Activated naive CD4-positive, alpha-beta T cell treated with anti-CD3 and anti-CD28 coated beads for 36 hours (primary cell): ENCODE measurements at regions of chr3 and their contacts with region 1.

Region 1: DNA sequence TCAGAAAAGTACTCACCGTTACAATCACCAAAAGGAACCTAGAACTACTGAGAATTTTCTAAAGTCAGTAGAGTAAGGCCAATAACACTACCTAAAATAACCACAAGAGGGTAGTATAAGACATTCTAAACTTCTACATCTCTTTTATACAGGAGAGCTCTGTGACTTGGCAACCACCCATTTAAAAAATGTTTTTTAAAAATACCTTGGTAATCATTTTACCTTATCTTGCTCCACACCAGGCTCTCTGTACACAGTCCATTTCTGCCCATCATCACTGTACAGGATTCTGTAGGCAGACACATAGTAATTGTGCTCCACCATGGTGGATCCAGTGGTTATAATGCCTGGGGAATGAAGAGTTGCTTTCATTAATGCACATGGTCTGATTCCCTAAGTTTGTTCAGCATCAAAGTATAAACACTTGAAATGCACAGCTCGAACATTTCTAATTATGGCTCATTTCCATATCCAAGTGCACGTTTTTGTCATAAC is 54.5 kb downstream of the ST3GAL6 start:
- DNase-seq: no peak
- H3K4me3 Mint-ChIP-seq: no peak overlapping the region
- H3K27ac Mint-ChIP-seq: no peak overlapping the region
- H3K4me1 Mint-ChIP-seq: no peaks in the 10 kb centered on the region
- H3K27me3 Mint-ChIP-seq: no peaks in the 10 kb centered on the region

Region 2: GRCh38 chr3:98602078-98602678 is 215.4 kb before region 1 on chr3:
- CTCF ChIA-PET with region 1: interaction called, 73 read pairs
- intact Hi-C with region 1: loop called (anchors 1 kb)
- DNase-seq: peak; percentile 50
- H3K4me3 Mint-ChIP-seq: no peak overlapping the region
- H3K27ac Mint-ChIP-seq: no peak overlapping the region
- H3K4me1 Mint-ChIP-seq: no peaks in the 10 kb centered on the region
- H3K27me3 Mint-ChIP-seq: peaks cover 8% of the 10 kb centered on the region

Region 3: DNA sequence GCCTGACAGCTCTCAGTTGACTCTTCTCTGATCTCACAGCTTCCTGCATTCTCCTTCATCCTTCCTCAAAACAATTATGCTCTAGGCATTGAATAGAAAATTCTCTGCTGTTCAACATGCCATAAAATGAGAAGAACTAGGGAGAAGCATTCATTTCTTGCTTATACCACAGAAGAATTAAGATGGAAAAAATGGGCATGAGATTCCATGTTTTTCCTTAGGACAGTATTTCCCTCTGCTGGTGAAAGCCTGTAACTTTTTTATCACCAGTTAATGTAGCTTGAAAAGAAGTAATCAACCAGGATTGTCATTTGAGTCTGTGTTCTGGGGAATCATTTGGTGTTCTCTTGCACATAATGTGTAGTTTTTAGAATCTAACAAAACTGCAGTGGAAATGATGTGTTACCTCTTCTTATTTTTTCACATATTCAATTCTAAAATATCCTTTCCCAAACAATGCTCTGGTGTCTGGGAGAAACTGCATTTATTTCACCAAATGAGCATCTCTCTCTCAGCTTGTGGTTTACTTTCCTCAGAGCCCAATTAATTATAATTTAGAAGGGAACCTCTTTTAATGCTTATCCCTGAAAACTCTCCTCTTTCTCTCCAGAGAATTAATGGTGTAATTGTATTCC is 176.7 kb after region 1 on chr3:
- CTCF ChIA-PET with region 1: interaction called, 23 read pairs
- intact Hi-C with region 1: loop called (anchors 1 kb)
- DNase-seq: no peak
- H3K4me3 Mint-ChIP-seq: no peak overlapping the region
- H3K27ac Mint-ChIP-seq: no peak overlapping the region
- H3K4me1 Mint-ChIP-seq: no peaks in the 10 kb centered on the region
- H3K27me3 Mint-ChIP-seq: peaks cover 3% of the 10 kb centered on the region

Region 4: GRCh38 chr3:99532246-99532645 is 714.7 kb after region 1 on chr3:
- CTCF ChIA-PET with region 1: no interaction called
- intact Hi-C with region 1: loop called (anchors 5 kb)
- DNase-seq: peak; percentile 27
- H3K4me3 Mint-ChIP-seq: no peak overlapping the region
- H3K27ac Mint-ChIP-seq: no peak overlapping the region
- H3K4me1 Mint-ChIP-seq: no peaks in the 10 kb centered on the region
- H3K27me3 Mint-ChIP-seq: peaks cover 3% of the 10 kb centered on the region

Region 5: GRCh38 chr3:99753268-99753975 is 935.8 kb after region 1 on chr3:
- CTCF ChIA-PET with region 1: interaction called, 4 read pairs
- intact Hi-C with region 1: loop called (anchors 1 kb)
- DNase-seq: peak; percentile 28
- H3K4me3 Mint-ChIP-seq: no peak overlapping the region
- H3K27ac Mint-ChIP-seq: no peak overlapping the region
- H3K4me1 Mint-ChIP-seq: no peaks in the 10 kb centered on the region
- H3K27me3 Mint-ChIP-seq: peaks cover 4% of the 10 kb centered on the region